ENCODE measurements at regions of chr7 and their contacts with region 1.

Region 1: DNA sequence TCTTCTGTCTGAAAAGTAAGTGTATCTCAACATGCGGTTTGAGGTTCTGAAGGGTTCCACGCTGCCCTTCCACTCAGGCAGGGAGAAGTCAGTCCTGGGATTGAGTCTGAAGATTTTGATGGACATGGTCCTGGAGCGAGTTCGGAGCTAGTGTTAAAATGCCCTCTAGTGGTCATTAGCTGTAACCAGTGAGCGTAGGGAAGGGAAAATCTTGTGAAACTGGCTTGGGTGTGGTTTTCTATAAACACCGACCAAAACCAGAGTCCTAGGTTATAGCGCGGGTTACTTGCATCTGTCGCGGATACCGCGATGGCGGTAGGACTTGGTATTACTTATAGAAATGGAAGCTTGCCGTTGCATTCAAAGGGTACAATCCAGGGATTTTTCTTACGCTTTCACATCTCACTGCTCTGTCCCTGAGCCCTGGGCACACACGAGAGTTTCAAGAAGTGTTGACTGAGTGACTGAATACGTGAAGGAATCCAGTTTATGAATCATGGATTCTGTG is 348.2 kb upstream of the C7orf33 start:
- DNase-seq: peak; percentile 67
- H3K4me3 ChIP-seq: peak overlapping the region in 1 of 2 experiments; percentile 16; a peak in 1 of 4 replicates
- H3K27ac ChIP-seq: no peak overlapping the region
- H3K4me1 ChIP-seq: no peaks in the 10 kb centered on the region; a peak in 1 of 4 replicates
- H3K27me3 ChIP-seq: no peaks in the 10 kb centered on the region
- CTCF ChIP-seq: peak; percentile 98
- EP300 ChIP-seq: no peak
- RAD21 ChIP-seq: peak; percentile 92

Region 2: GRCh38 chr7:148084138-148084537 is 158.2 kb before region 1 on chr7:
- CTCF ChIA-PET with region 1: interaction called, 11 read pairs
- POLR2A ChIA-PET with region 1: no interaction called
- DNase-seq: peak; percentile 77
- H3K4me3 ChIP-seq: no peak overlapping the region
- H3K27ac ChIP-seq: peak overlapping the region; percentile 48 to 58; a peak in 3 of 4 replicates
- H3K4me1 ChIP-seq: peaks cover 9 to 14% of the 10 kb centered on the region in 2 experiments; a peak in 3 of 4 replicates
- H3K27me3 ChIP-seq: no peaks in the 10 kb centered on the region
- CTCF ChIP-seq: peak; percentile 98
- EP300 ChIP-seq: peak in 1 of 2 experiments; percentile 87; a peak in 2 of 4 replicates
- RAD21 ChIP-seq: peak; percentile 100

Region 3: GRCh38 chr7:148211740-148212151 is 30.6 kb before region 1 on chr7:
- CTCF ChIA-PET with region 1: interaction called, 13 read pairs
- POLR2A ChIA-PET with region 1: no interaction called
- DNase-seq: no peak
- H3K4me3 ChIP-seq: no peak overlapping the region
- H3K27ac ChIP-seq: no peak overlapping the region
- H3K4me1 ChIP-seq: no peaks in the 10 kb centered on the region
- H3K27me3 ChIP-seq: no peaks in the 10 kb centered on the region
- CTCF ChIP-seq: no peak
- EP300 ChIP-seq: no peak
- RAD21 ChIP-seq: no peak

Region 4: GRCh38 chr7:148218603-148219002 is 23.7 kb before region 1 on chr7:
- CTCF ChIA-PET with region 1: interaction called, 12 read pairs
- POLR2A ChIA-PET with region 1: no interaction called
- DNase-seq: no peak
- H3K4me3 ChIP-seq: no peak overlapping the region
- H3K27ac ChIP-seq: no peak overlapping the region
- H3K4me1 ChIP-seq: no peaks in the 10 kb centered on the region
- H3K27me3 ChIP-seq: no peaks in the 10 kb centered on the region
- CTCF ChIP-seq: no peak
- EP300 ChIP-seq: no peak
- RAD21 ChIP-seq: no peak

Region 5: DNA sequence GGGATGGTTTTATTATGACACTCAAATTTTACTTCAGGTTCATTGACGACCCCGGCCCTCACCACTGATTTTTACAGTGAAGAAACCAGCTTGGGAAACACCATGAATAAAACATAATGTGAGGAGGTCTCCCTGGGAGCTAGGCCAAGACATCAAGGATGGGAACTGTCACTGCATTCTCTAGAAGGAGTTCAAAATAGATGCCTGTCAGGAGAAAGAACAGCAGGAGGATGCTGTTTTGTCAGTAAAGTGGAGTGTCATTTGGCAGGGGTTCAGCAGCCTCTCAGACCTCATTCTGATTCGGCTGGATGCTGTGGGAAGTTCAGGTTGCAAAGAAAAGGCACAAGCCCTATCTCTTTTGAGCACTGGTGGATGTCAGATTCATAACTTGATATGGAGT is 12.1 kb before region 1 on chr7:
- CTCF ChIA-PET with region 1: interaction called, 29 read pairs
- POLR2A ChIA-PET with region 1: no interaction called
- DNase-seq: peak; percentile 40
- H3K4me3 ChIP-seq: no peak overlapping the region
- H3K27ac ChIP-seq: no peak overlapping the region
- H3K4me1 ChIP-seq: peaks cover 0 to 5% of the 10 kb centered on the region in 2 experiments; a peak in 1 of 4 replicates
- H3K27me3 ChIP-seq: no peaks in the 10 kb centered on the region
- CTCF ChIP-seq: no peak
- EP300 ChIP-seq: no peak
- RAD21 ChIP-seq: no peak

Region 6: DNA sequence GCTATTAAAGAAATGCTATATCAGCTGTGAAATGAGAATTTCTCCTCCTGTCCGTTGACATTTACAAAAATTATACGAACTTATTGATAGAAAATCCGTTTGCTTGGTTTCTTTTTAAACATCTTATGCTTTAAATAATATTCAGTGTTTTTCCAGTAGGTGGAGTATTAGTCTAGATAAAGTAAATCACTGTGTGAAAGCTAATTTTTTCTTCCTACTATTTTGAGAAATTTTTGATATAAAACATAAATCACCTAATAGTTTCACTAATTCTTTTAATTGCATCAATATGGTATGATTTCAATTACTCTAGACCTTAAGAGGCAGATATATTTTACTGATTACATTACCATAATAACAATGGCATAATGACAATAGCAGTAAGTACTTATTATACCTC is 13.0 kb after region 1 on chr7:
- CTCF ChIA-PET with region 1: interaction called, 56 read pairs
- POLR2A ChIA-PET with region 1: no interaction called
- DNase-seq: no peak
- H3K4me3 ChIP-seq: no peak overlapping the region; a peak in 1 of 4 replicates
- H3K27ac ChIP-seq: no peak overlapping the region
- H3K4me1 ChIP-seq: no peaks in the 10 kb centered on the region; a peak in 1 of 4 replicates
- H3K27me3 ChIP-seq: no peaks in the 10 kb centered on the region
- CTCF ChIP-seq: peak; percentile 65
- EP300 ChIP-seq: no peak
- RAD21 ChIP-seq: 0 out of 2 replicates have a peak, but pooled peaks have one; percentile 11

Measured in SK-N-SH (cell line).